ENCODE measurements at regions of chr2 and their contacts with region 1.

Region 1: DNA sequence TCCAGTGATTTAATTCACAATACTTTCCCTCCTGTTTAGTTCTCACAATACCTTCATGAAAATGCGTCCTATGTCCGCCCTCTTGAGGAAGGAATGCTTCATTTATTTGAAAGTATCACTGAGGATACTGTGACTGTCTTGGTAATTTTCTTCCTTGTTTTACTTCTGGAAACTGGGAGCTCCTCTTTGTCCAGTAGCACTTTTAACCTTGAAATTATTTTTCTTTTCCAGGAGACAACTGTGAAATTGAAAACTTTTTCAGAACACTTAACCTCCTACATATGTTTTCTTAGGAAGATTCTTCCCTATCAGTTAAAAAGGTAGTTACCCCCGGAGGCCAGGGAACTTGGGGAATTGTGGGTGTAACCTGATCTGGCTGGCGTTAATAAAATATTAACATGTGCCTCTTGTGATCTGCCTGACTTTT is 58.9 kb upstream of the STON1 start:
- DNase-seq: peak; percentile 53
- H3K4me3 ChIP-seq: no peak overlapping the region
- H3K27ac ChIP-seq: peak overlapping the region; percentile 32
- H3K4me1 ChIP-seq: no peaks in the 10 kb centered on the region
- H3K27me3 ChIP-seq: no peaks in the 10 kb centered on the region
- CTCF ChIP-seq: peak; percentile 60 to 69

Region 2: DNA sequence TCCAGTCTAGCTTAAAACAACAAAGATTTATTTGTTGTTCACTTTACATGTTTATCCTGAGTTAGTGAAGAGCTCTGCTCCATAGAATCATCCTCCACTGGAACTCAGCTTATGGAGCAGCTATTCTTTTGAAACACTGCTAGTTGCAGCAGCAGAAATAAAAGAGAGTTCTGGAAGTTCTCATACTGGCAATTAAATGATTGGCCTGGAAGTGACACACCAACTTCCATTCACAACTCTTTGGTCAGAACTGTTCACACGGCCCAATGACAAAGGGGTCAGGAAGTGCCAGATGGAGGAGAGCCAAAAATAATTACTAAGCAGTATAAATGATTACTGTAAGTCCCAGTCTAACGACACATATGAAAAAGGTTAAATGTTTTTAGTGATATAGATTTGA is 603.9 kb before region 1 on chr2:
- CTCF ChIA-PET with region 1: no interaction called
- dilution Hi-C with region 1: no loop called
- in situ Hi-C with region 1: loop called in 1 of 2 experiments (anchors 25 kb)
- intact Hi-C with region 1: no loop called
- DNase-seq: peak; percentile 77
- H3K4me3 ChIP-seq: no peak overlapping the region
- H3K27ac ChIP-seq: no peak overlapping the region
- H3K4me1 ChIP-seq: peaks cover 11% of the 10 kb centered on the region
- H3K27me3 ChIP-seq: no peaks in the 10 kb centered on the region
- CTCF ChIP-seq: no peak

Region 3: DNA sequence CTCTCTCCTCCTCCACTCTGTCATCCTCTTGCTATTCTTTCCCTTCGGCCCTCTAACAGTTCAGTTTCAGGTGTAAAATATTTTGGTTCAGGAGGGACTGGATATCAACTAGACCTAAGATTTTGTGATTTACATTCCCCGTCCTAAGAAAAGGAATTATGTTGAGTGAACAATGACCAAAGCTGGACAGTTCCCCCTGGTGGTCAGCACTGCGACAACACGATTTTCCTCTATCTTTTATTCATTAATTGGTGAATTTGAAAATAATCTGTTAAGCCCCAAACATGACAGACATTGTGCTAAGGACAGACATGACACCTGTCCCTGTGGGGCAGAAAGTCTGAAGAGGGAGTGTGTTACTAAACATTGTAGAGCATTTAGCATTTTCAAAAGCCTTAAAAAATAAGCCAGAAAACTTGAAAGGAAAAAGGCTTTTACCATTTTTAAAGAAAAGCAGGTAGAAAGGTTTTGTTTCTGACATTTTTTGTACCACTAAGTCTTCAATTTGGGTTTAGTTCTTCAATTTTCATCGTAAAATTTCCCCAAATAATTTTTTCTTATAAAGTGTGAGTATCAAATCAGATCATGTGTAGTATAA is 118.2 kb after region 1 on chr2:
- CTCF ChIA-PET with region 1: no interaction called
- dilution Hi-C with region 1: no loop called
- in situ Hi-C with region 1: no loop called
- intact Hi-C with region 1: loop called (anchors 2 kb)
- DNase-seq: peak; percentile 19
- H3K4me3 ChIP-seq: no peak overlapping the region
- H3K27ac ChIP-seq: no peak overlapping the region
- H3K4me1 ChIP-seq: no peaks in the 10 kb centered on the region
- H3K27me3 ChIP-seq: no peaks in the 10 kb centered on the region
- CTCF ChIP-seq: peak; percentile 72 to 88